Heart right ventricle (tissue), 16 donors: ENCODE measurements at regions of chr19 and their contacts with region 1.

Region 1: DNA sequence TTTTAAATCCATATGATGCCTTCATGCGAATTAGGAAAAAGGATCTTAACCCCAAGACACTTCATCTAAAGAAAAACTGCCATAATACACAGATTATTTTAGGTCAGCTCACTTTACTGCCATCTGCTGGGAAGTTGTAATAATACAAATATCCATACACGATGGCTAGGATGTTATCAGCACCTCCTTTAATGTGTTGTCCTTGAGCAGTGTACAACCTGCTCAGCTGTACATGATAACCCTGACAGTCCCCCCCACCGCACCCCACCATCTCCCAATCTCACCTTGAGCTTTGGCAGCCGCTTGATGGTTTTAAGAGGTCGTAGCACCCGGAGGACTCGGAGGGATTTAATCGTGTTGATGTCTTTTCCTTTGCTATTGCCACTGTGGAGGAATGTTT is 112.2 kb downstream of the IER2 start:
- DNase-seq: no peak
- ATAC-seq: peak; percentile 33 to 75 (median 58)
- H3K4me3 ChIP-seq: no peak overlapping the region
- H3K27ac ChIP-seq: no peak overlapping the region
- H3K4me1 ChIP-seq: peaks cover 0 to 18% (median 0%) of the 10 kb centered on the region in 9 donors
- H3K27me3 ChIP-seq: peaks cover 0 to 5% (median 0%) of the 10 kb centered on the region in 7 donors
- CTCF ChIP-seq: peak in 8 of 9 donors; percentile 39 to 76 (median 66)

Region 2: GRCh38 chr19:13104360-13104847 is 158.0 kb before region 1 on chr19:
- intact Hi-C with region 1: loop called in 1 of 10 experiments (anchors 5 kb)
- DNase-seq: peak; percentile 80 to 85
- ATAC-seq: peak; percentile 8 to 51 (median 43)
- H3K4me3 ChIP-seq: peak overlapping the region in 6 of 10 donors; percentile 23 to 60 (median 28)
- H3K27ac ChIP-seq: peak overlapping the region; percentile 52 to 96 (median 92)
- H3K4me1 ChIP-seq: peaks cover 13 to 69% (median 53%) of the 10 kb centered on the region in 9 donors
- H3K27me3 ChIP-seq: no peaks in the 10 kb centered on the region
- CTCF ChIP-seq: peak; percentile 46 to 86 (median 72)

Region 3: GRCh38 chr19:13117772-13118423 is 144.6 kb before region 1 on chr19 and contains the start of gene NACC1:
- intact Hi-C with region 1: loop called in 4 of 10 experiments (anchors 10 kb)
- DNase-seq: peak; percentile 89 to 90
- ATAC-seq: peak; percentile 93 to 97 (median 96)
- H3K4me3 ChIP-seq: peak within 1 kb of the TSS; percentile 89 to 99 (median 97)
- H3K27ac ChIP-seq: peak within 1 kb of the TSS in 9 of 10 donors; percentile 65 to 91 (median 77)
- H3K4me1 ChIP-seq: peaks cover 12 to 54% (median 44%) of the 10 kb centered on the region in 9 donors
- H3K27me3 ChIP-seq: no peaks in the 10 kb centered on the region
- CTCF ChIP-seq: no peak
- total RNA-seq, gene NACC1: 31.1 to 58.0 (median 35.1) TPM

Region 4: GRCh38 chr19:13195678-13196077 is 66.8 kb before region 1 on chr19:
- intact Hi-C with region 1: loop called in 9 of 10 experiments (anchors 2 to 5 kb)
- DNase-seq: no peak
- ATAC-seq: no peak
- H3K4me3 ChIP-seq: no peak overlapping the region
- H3K27ac ChIP-seq: no peak overlapping the region
- H3K4me1 ChIP-seq: peaks cover 0 to 18% (median 0%) of the 10 kb centered on the region in 9 donors
- H3K27me3 ChIP-seq: no peaks in the 10 kb centered on the region
- CTCF ChIP-seq: peak in 1 of 9 donors; percentile 22

Region 5: DNA sequence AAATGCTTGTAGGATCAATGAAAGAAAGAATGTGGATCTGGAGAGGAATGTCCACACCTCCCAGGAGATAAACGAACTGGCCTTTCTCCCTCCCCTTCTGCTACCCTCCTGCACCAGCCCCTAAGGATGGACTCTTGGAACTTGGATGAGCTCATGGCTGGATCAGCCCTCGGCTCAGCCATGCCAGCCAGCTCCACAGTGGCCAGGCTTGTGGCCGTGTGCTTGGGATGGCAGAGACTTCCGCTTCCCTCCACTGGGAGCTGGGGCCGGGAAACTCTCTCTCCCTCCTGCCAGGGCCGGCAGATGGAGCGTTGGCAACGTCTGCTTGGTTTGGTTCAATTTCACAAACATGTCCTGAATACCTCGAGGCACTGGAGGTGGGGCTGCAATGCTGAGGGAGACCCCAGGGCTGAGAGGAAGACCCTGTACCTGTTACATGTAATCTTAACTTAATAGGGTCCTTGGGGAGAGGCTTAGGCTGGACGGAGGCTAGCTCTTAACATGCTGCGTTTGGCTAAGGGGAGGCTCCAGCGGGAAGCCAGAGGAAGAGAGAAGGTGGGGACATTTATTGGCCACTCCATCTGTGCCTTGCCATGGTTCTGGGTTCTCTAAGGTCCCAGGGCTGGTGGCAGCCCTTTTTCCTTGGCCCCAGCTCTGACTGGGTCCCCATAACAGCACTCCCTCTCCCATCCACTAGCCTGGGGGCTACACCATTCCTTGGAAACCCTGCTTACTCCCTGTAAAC is 40.2 kb after region 1 on chr19:
- intact Hi-C with region 1: no loop called
- DNase-seq: no peak
- ATAC-seq: peak in 1 of 8 donors; percentile 33
- H3K4me3 ChIP-seq: no peak overlapping the region
- H3K27ac ChIP-seq: no peak overlapping the region
- H3K4me1 ChIP-seq: no peaks in the 10 kb centered on the region
- H3K27me3 ChIP-seq: peaks cover 6 to 78% (median 63%) of the 10 kb centered on the region in 7 donors
- CTCF ChIP-seq: no peak

Region 6: DNA sequence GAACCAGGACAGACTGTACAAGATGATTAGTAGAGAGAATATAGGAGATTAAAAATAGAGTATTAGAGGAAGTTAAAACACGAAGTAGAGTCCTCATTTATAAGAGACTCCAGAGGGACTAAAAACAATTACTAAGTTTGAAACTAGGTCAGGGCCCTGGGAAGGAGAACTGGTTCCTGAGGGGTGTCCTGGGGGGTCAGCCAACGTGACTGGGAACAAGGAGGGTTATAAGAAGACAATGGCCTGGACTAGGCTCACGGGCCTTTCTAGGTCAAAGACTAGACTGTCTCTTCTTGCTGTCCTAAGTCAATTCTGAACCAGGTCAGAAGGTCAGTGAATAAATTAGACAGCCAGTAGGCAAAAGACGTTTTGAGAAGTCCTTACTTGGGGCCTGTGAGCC is 53.0 kb after region 1 on chr19:
- intact Hi-C with region 1: no loop called
- DNase-seq: no peak
- ATAC-seq: peak in 2 of 8 donors; percentile 59 to 61
- H3K4me3 ChIP-seq: no peak overlapping the region
- H3K27ac ChIP-seq: no peak overlapping the region
- H3K4me1 ChIP-seq: no peaks in the 10 kb centered on the region
- H3K27me3 ChIP-seq: peaks cover 0 to 5% (median 0%) of the 10 kb centered on the region in 7 donors
- CTCF ChIP-seq: no peak

Region 7: GRCh38 chr19:13329766-13330165 is 67.3 kb after region 1 on chr19:
- intact Hi-C with region 1: no loop called
- DNase-seq: no peak
- ATAC-seq: no peak
- H3K4me3 ChIP-seq: no peak overlapping the region
- H3K27ac ChIP-seq: no peak overlapping the region
- H3K4me1 ChIP-seq: no peaks in the 10 kb centered on the region
- H3K27me3 ChIP-seq: peaks cover 0 to 7% (median 0%) of the 10 kb centered on the region in 7 donors
- CTCF ChIP-seq: no peak